Prostate gland (tissue), 2 donors: ENCODE measurements at regions of chr15 and their contacts with region 1.

Region 1: DNA sequence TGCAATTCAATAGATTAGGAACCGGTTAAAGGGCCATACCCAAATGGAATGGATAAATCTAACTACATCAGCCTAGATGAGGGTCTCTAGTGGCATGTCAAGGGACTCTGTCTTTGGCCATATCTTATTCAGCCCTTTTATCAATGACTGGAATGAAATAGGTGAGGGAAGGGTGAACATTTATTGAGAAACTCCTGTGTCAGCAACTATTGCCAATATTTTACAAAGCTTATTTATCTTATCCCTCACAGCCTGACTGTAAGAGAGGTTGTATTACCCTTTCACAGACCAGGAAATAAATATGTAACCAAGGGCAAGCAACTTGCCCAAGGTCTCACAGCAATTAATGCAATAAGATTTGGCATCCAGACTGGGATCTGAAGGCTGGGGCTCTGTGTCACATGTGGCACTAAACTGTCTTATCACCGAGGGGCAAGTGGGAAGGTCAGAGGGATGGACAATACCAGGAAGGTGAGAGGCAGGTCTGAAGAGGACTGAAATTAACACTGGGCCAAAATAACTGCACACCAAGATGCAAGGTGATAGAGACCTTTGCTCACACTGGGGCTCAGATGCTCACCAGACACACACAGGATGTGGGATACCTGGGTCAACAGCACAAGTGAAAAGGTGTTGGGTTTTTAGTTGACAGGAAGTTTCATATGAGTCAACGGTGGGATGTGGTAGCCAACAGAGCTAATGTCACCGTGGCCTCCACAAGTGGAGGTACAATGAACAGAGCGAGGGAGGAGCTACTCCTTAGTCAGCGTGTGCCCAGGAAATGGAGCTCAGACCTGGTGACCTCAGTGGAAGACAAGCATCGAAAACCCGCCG is 261.3 kb downstream of the RPLP1 start:
- DNase-seq: no peak
- H3K4me3 ChIP-seq: no peak overlapping the region
- H3K27ac ChIP-seq: no peak overlapping the region
- H3K4me1 ChIP-seq: no peaks in the 10 kb centered on the region
- H3K27me3 ChIP-seq: no peaks in the 10 kb centered on the region
- CTCF ChIP-seq: no peak
- POLR2A ChIP-seq: no peak

Region 2: GRCh38 chr15:70014860-70015490 is 301.0 kb after region 1 on chr15:
- intact Hi-C with region 1: no loop called
- DNase-seq: no peak
- H3K4me3 ChIP-seq: no peak overlapping the region
- H3K27ac ChIP-seq: no peak overlapping the region
- H3K4me1 ChIP-seq: no peaks in the 10 kb centered on the region
- H3K27me3 ChIP-seq: no peaks in the 10 kb centered on the region
- CTCF ChIP-seq: no peak
- POLR2A ChIP-seq: no peak

Region 3: GRCh38 chr15:70474471-70475396 is 760.8 kb after region 1 on chr15:
- intact Hi-C with region 1: loop called (anchors 10 kb)
- DNase-seq: peak; percentile 92
- H3K4me3 ChIP-seq: peak overlapping the region in 1 of 2 donors; percentile 2
- H3K27ac ChIP-seq: peak overlapping the region; percentile 67 to 71
- H3K4me1 ChIP-seq: peaks cover 3% of the 10 kb centered on the region
- H3K27me3 ChIP-seq: no peaks in the 10 kb centered on the region
- CTCF ChIP-seq: peak in 1 of 4 experiments; percentile 13
- POLR2A ChIP-seq: peak; percentile 27